Sigmoid colon (tissue), 7 donors: ENCODE measurements at regions of chr21 and their contacts with region 1.

Region 1: DNA sequence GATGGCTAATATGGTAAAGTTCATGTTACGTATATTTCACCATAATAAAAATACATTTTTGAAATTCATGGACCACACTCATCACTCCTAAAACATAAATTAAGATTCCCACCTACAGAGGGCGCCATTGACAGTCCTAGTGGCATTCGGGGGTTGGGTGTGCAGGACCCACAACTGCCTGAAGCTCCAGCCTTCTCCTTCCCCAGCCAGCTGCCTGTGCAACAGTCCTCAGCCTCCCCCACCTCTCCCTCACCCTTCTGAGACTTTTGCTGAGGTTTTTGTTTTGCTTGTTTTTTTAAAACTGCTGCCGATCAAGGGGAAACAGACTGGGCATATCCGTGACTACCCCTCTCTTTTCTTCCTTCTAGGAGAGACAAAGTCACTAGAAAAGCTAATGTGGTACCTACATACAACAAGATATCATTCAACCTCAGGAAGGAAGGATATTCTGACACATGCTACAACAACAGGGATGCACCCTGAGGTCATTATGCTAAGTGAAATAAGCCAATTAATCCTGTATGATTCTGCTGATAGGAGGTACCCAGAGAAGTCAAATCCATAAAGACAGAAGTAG is 9.2 kb upstream of the EVA1C start:
- DNase-seq: peak; percentile 81
- H3K4me3 ChIP-seq: no peak overlapping the region
- H3K27ac ChIP-seq: no peak overlapping the region
- H3K4me1 ChIP-seq: peaks cover 0 to 7% (median 2%) of the 10 kb centered on the region in 4 donors
- H3K27me3 ChIP-seq: no peaks in the 10 kb centered on the region
- CTCF ChIP-seq: peak; percentile 55 to 60 (median 58)
- EP300 ChIP-seq: no peak
- POLR2A ChIP-seq: no peak

Region 2: DNA sequence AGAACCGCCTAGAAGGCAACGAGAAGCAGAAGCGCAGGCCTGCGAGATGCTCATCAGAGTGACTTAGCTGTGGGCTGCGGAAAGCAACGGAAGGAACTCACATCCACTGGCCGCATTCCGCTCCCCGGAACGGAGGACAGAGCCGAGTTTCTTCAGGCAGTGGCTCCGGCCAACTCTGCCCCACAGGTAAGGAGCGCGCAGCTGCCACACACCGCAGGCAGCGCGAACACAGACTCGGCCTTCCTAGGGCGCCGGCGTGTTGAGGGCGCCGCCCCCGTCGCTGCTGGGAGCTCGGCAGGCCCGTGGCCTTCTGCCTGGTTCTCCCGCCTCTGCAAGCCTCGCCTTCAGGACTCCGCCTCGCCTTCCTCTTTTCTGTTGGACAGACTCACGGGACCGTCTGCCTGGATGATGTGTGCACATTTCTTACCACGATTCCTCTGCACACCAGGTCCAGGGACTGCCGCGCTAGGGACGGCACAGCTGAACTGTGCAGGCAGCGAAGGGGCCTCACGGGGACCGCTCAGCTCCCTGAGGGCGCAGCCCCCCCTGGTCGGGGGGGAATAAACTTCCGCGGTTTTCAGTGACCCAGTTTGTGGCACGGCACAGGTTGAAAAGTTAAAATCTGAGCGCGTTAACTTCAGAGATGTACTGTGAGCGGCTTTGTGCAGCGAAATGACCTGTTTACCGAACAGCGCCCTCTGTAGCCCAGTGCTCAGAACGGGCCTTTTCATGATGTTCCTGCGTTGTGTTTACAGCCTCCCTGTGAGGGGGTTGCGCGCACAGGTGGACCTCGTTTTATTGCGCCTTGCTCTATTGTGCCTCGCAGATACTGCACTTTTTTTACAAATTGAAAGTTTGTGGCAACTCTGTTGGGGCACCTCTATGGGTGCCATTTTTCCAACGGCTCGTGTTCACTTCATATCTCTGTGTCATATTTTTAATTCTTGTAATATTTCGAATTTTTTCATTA is 166.3 kb after region 1 on chr21:
- intact Hi-C with region 1: loop called (anchors 2 kb)
- DNase-seq: peak; percentile 89
- H3K4me3 ChIP-seq: peak overlapping the region; percentile 35 to 62 (median 56)
- H3K27ac ChIP-seq: peak overlapping the region; percentile 78 to 88 (median 83)
- H3K4me1 ChIP-seq: peaks cover 0 to 13% (median 10%) of the 10 kb centered on the region in 4 donors
- H3K27me3 ChIP-seq: no peaks in the 10 kb centered on the region
- CTCF ChIP-seq: peak; percentile 60 to 85 (median 76)
- EP300 ChIP-seq: no peak
- POLR2A ChIP-seq: no peak

Region 3: DNA sequence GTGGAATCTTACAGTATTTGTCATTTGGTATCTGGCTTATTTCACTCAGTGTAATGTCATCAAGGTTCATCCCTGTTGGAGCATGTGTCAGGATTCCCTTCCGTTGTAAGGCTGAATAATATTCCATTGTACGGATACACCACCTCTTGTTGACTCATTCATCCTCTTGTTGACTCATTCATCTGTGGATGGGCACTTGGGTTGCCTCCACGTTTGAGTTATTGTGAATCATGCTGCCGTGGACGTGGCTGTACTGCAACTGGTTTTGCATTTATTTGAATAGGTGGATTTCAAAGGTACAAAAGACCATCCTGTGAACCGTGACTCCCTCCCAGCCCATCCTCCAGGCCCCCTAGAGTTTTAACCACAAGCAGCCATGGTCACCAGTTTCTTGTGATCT is 193.9 kb after region 1 on chr21:
- intact Hi-C with region 1: loop called (anchors 2 kb)
- DNase-seq: no peak
- H3K4me3 ChIP-seq: no peak overlapping the region
- H3K27ac ChIP-seq: no peak overlapping the region
- H3K4me1 ChIP-seq: no peaks in the 10 kb centered on the region
- H3K27me3 ChIP-seq: no peaks in the 10 kb centered on the region
- CTCF ChIP-seq: no peak
- EP300 ChIP-seq: no peak
- POLR2A ChIP-seq: no peak